BJ (cell line): ENCODE measurements at regions of chr11 and their contacts with region 1.

Region 1: GRCh38 chr11:363948-364761 is 5.1 kb upstream of the B4GALNT4 start:
- DNase-seq: no peak
- H3K4me3 ChIP-seq: no peak overlapping the region
- H3K27me3 ChIP-seq: peaks cover 25% of the 10 kb centered on the region
- CTCF ChIP-seq: peak; percentile 53

Region 2: GRCh38 chr11:230431-230830 is 133.7 kb before region 1 on chr11:
- CTCF ChIA-PET with region 1: interaction called, 5 read pairs
- POLR2A ChIA-PET with region 1: interaction called, 19 read pairs
- DNase-seq: no peak
- H3K4me3 ChIP-seq: no peak overlapping the region
- H3K27me3 ChIP-seq: no peaks in the 10 kb centered on the region
- CTCF ChIP-seq: no peak